B cell (primary cell): ENCODE measurements at regions of chr3 and their contacts with region 1.

Region 1: DNA sequence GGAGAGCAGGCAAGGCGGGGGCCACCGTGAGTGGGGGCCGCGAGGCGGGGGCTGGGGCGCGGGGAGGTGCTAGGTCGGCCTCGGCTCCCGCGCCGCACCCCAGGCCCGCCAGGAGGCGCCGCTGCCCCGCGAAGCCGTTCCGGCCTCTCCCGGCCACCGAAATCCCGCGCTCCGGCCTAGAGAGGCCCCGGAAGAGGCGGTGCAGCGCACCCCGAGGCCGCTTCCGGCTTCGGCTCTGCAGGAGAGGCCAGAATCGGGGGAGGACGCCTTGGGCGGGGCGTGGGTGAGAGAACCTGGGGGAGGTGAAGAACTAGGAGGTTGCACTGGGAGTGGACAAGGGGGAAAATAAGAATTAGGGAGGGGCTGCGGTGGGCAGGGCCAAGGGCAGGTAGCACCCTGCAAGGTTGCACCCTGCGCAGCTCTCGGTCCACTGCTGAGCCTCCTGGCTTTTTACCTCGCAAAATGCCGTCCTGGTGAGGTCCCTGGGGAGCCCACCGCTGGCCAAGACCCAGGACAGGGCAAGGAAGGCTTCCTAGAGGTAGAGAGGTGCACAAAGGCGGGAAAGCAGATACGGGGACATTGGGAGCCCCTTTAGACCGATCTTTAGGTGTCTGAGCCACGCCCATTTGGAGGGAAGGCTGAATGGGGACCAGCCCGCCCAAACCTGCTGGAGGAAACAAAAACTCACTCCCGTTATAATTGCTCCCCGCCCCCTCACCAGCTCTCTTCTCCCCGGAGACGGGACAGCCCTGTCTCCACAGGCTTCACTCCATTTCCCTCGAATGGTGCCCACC is 8.4 kb upstream of the GNAI2 start:
- DNase-seq: peak; percentile 93
- ATAC-seq: peak; percentile 81
- H3K4me3 ChIP-seq: peak overlapping the region; percentile 66 to 82 (median 72)
- H3K4me3 Mint-ChIP-seq: peak overlapping the region; percentile 96
- H3K27ac ChIP-seq: peak overlapping the region; percentile 21 to 41
- H3K27ac Mint-ChIP-seq: peak overlapping the region; percentile 94
- H3K4me1 ChIP-seq: peaks cover 25 to 51% of the 10 kb centered on the region in 2 donors
- H3K4me1 Mint-ChIP-seq: peaks cover 45% of the 10 kb centered on the region
- H3K27me3 ChIP-seq: no peaks in the 10 kb centered on the region
- H3K27me3 Mint-ChIP-seq: peaks cover 4% of the 10 kb centered on the region
- CTCF ChIP-seq: peak; percentile 92

Region 2: DNA sequence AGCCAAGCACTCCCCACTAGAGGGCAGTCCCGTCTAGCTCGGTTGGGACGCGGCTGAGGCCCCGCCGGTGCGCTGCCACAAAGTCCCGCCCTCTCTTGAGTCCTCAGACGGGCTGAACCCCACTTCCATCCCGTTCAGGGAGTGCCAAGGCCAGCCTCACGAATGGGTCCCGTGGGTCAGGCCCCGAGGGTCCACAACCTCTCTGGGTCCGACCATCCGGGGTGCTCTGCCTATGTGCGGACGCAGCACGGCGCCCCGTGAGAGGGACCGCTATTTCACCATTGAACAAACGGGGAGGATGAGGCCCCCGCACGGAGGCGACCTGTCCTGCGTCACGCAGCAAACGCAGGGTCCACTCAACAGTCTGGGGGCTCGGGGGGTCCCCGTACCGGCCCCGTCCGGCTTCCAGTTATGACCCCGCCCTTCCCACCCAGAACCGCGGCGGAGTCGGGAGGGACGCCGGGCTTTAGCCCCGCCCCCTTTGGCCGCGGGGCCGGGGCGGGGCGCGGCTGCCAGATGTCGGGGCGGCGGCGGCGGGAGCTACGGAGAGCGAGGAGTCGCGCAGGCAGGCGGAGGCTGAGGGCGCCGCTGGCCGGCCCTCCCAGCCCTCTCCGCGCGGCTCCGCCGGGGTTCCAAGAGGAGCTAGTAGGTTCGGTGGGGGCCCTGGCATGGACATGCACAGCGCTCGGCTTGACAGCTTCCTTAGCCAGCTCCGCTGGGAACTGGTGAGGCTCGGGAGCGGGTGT is 424.7 kb before region 1 on chr3 and contains the start of gene INKA1:
- CTCF ChIA-PET with region 1: no interaction called
- POLR2A ChIA-PET with region 1: no interaction called
- intact Hi-C with region 1: loop called (anchors 5 kb)
- DNase-seq: peak; percentile 94
- ATAC-seq: peak; percentile 63
- H3K4me3 ChIP-seq: peak within 1 kb of the TSS; percentile 73 to 99 (median 95)
- H3K4me3 Mint-ChIP-seq: peak within 1 kb of the TSS; percentile 86
- H3K27ac ChIP-seq: peak within 1 kb of the TSS; percentile 91 to 97
- H3K27ac Mint-ChIP-seq: peak within 1 kb of the TSS; percentile 98
- H3K4me1 ChIP-seq: peaks cover 42 to 47% of the 10 kb centered on the region in 2 donors
- H3K4me1 Mint-ChIP-seq: peaks cover 52% of the 10 kb centered on the region
- H3K27me3 ChIP-seq: peaks cover 0 to 3% (median 0%) of the 10 kb centered on the region in 4 experiments
- H3K27me3 Mint-ChIP-seq: peaks cover 5% of the 10 kb centered on the region
- CTCF ChIP-seq: peak; percentile 84
- total RNA-seq, gene INKA1: 25.8 and 28.2 TPM in 2 replicates

Region 3: GRCh38 chr3:50121416-50122032 is 106.1 kb before region 1 on chr3:
- CTCF ChIA-PET with region 1: interaction called, 28 read pairs
- POLR2A ChIA-PET with region 1: interaction called, 6 read pairs
- intact Hi-C with region 1: no loop called
- DNase-seq: peak; percentile 82
- ATAC-seq: peak; percentile 80
- H3K4me3 ChIP-seq: no peak overlapping the region
- H3K4me3 Mint-ChIP-seq: no peak overlapping the region
- H3K27ac ChIP-seq: no peak overlapping the region
- H3K27ac Mint-ChIP-seq: no peak overlapping the region
- H3K4me1 ChIP-seq: no peaks in the 10 kb centered on the region
- H3K4me1 Mint-ChIP-seq: peaks cover 2% of the 10 kb centered on the region
- H3K27me3 ChIP-seq: peaks cover 0 to 2% (median 0%) of the 10 kb centered on the region in 4 experiments
- H3K27me3 Mint-ChIP-seq: no peaks in the 10 kb centered on the region
- CTCF ChIP-seq: peak; percentile 91

Region 4: GRCh38 chr3:50192689-50193141 is 34.9 kb before region 1 on chr3:
- CTCF ChIA-PET with region 1: interaction called, 214 read pairs
- POLR2A ChIA-PET with region 1: interaction called, 16 read pairs
- intact Hi-C with region 1: loop called (anchors 1 kb)
- DNase-seq: peak; percentile 88
- ATAC-seq: peak; percentile 69
- H3K4me3 ChIP-seq: no peak overlapping the region
- H3K4me3 Mint-ChIP-seq: peak overlapping the region; percentile 52
- H3K27ac ChIP-seq: no peak overlapping the region
- H3K27ac Mint-ChIP-seq: no peak overlapping the region
- H3K4me1 ChIP-seq: peaks cover 17 to 23% of the 10 kb centered on the region in 2 donors
- H3K4me1 Mint-ChIP-seq: peaks cover 11% of the 10 kb centered on the region
- H3K27me3 ChIP-seq: peaks cover 0 to 46% (median 11%) of the 10 kb centered on the region in 4 experiments
- H3K27me3 Mint-ChIP-seq: peaks cover 18% of the 10 kb centered on the region
- CTCF ChIP-seq: peak; percentile 86

Region 5: GRCh38 chr3:50245831-50246516 is 18.4 kb after region 1 on chr3:
- CTCF ChIA-PET with region 1: interaction called, 596 read pairs
- POLR2A ChIA-PET with region 1: interaction called, 10 read pairs
- intact Hi-C with region 1: loop called (anchors 1 kb)
- DNase-seq: peak; percentile 92
- ATAC-seq: peak; percentile 66
- H3K4me3 ChIP-seq: peak overlapping the region in 4 of 5 experiments; percentile 37 to 50 (median 40)
- H3K4me3 Mint-ChIP-seq: peak overlapping the region; percentile 82
- H3K27ac ChIP-seq: peak overlapping the region; percentile 76 to 86
- H3K27ac Mint-ChIP-seq: peak overlapping the region; percentile 89
- H3K4me1 ChIP-seq: peaks cover 66 to 94% of the 10 kb centered on the region in 2 donors
- H3K4me1 Mint-ChIP-seq: peaks cover 82% of the 10 kb centered on the region
- H3K27me3 ChIP-seq: no peaks in the 10 kb centered on the region
- H3K27me3 Mint-ChIP-seq: no peaks in the 10 kb centered on the region
- CTCF ChIP-seq: peak; percentile 96

Region 6: DNA sequence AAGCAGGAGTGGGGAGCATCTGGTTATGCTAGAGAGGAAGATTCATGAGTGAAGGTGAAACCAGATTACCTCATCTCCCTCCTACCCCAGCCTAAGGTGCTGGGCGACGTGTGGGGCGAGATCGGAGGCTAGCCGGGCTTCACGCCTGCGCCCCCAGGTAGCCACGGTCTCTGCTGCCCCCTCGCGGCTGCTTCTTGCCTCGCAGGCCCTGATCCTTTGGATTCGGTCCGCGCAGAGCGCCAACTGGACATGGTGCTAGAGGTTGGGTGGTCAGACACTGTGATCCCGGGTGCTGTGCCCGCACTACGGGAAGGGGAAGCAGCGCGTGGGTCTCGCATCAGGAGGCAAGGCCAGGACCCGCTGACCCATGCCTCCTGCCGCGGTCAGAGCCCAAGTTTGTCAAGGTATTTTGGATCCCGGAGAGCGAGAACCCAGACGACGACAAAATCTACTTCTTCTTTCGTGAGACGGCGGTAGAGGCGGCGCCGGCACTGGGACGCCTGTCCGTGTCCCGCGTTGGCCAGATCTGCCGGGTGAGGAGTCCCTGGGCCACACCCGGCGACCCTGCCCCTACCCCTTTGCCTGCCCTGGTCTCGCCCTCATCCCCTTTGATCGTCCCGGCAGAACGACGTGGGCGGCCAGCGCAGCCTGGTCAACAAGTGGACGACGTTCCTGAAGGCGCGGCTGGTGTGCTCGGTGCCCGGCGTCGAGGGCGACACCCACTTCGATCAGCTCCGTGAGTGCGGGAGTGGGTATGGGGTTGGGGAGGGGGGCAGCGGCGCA is 45.5 kb after region 1 on chr3:
- CTCF ChIA-PET with region 1: interaction called, 18 read pairs
- POLR2A ChIA-PET with region 1: no interaction called
- intact Hi-C with region 1: loop called (anchors 1 kb)
- DNase-seq: peak; percentile 91
- ATAC-seq: peak; percentile 98
- H3K4me3 ChIP-seq: peak overlapping the region in 3 of 5 experiments; percentile 8 to 48 (median 30)
- H3K4me3 Mint-ChIP-seq: peak overlapping the region; percentile 82
- H3K27ac ChIP-seq: no peak overlapping the region
- H3K27ac Mint-ChIP-seq: peak overlapping the region; percentile 81
- H3K4me1 ChIP-seq: peaks cover 33 to 39% of the 10 kb centered on the region in 2 donors
- H3K4me1 Mint-ChIP-seq: peaks cover 26% of the 10 kb centered on the region
- H3K27me3 ChIP-seq: peaks cover 0 to 53% (median 21%) of the 10 kb centered on the region in 4 experiments
- H3K27me3 Mint-ChIP-seq: peaks cover 36% of the 10 kb centered on the region
- CTCF ChIP-seq: peak; percentile 97

Region 7: DNA sequence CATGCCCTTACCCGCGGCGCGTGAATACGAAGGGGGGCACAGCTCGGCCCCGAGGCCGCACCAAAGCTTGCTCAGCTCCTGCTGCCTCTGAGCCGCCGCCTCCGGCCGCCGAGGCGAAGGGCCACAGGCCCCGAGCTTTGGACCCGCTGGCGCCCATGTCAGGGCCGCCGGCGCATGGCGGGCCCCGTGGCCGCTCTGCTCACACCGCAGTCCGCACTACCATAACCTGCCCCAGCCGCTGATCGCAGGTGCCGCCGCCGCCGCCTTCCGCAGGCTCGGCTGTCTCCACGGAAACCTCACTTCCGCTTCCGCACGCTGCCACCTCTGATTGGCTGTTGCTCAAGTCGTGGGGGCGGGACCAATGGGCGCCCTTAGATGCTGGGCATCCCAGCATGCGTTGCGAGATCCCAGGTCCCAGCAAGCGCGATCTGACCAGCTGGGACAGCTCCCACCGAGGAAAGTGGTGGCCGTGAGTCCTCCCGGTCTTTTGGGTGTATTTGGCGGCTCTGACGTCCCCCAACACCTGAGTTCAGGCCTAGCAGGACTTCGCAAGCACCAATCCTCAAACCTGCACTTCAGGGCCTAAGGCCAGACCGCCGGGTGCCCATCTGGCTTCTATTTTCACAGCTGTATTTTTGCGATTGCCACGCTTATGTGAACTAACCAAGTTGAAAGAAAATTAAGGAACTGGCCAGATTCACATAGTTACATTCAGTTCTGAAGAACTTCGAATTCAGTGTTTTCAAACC is 100.5 kb after region 1 on chr3 and contains the start of gene TUSC2:
- CTCF ChIA-PET with region 1: interaction called, 7 read pairs
- POLR2A ChIA-PET with region 1: no interaction called
- intact Hi-C with region 1: loop called (anchors 1 kb)
- DNase-seq: peak; percentile 97
- ATAC-seq: peak; percentile 94
- H3K4me3 ChIP-seq: peak within 1 kb of the TSS; percentile 39 to 98 (median 87)
- H3K4me3 Mint-ChIP-seq: peak within 1 kb of the TSS; percentile 95
- H3K27ac ChIP-seq: peak within 1 kb of the TSS; percentile 66 to 90
- H3K27ac Mint-ChIP-seq: peak within 1 kb of the TSS; percentile 91
- H3K4me1 ChIP-seq: peaks cover 14 to 24% of the 10 kb centered on the region in 2 donors
- H3K4me1 Mint-ChIP-seq: peaks cover 25% of the 10 kb centered on the region
- H3K27me3 ChIP-seq: no peaks in the 10 kb centered on the region
- H3K27me3 Mint-ChIP-seq: no peaks in the 10 kb centered on the region
- CTCF ChIP-seq: no peak
- total RNA-seq, gene TUSC2: 25.5 and 28.2 TPM in 2 replicates

Region 8: GRCh38 chr3:50737908-50738598 is 510.5 kb after region 1 on chr3:
- CTCF ChIA-PET with region 1: no interaction called
- POLR2A ChIA-PET with region 1: no interaction called
- intact Hi-C with region 1: no loop called
- DNase-seq: no peak
- ATAC-seq: no peak
- H3K4me3 ChIP-seq: no peak overlapping the region
- H3K4me3 Mint-ChIP-seq: no peak overlapping the region
- H3K27ac ChIP-seq: no peak overlapping the region
- H3K27ac Mint-ChIP-seq: no peak overlapping the region
- H3K4me1 ChIP-seq: no peaks in the 10 kb centered on the region
- H3K4me1 Mint-ChIP-seq: no peaks in the 10 kb centered on the region
- H3K27me3 ChIP-seq: no peaks in the 10 kb centered on the region
- H3K27me3 Mint-ChIP-seq: peaks cover 4% of the 10 kb centered on the region
- CTCF ChIP-seq: no peak

Region 9: GRCh38 chr3:51163051-51163450 is 935.5 kb after region 1 on chr3:
- CTCF ChIA-PET with region 1: no interaction called
- POLR2A ChIA-PET with region 1: no interaction called
- intact Hi-C with region 1: no loop called
- DNase-seq: no peak
- ATAC-seq: no peak
- H3K4me3 ChIP-seq: no peak overlapping the region
- H3K4me3 Mint-ChIP-seq: no peak overlapping the region
- H3K27ac ChIP-seq: no peak overlapping the region
- H3K27ac Mint-ChIP-seq: no peak overlapping the region
- H3K4me1 ChIP-seq: no peaks in the 10 kb centered on the region
- H3K4me1 Mint-ChIP-seq: no peaks in the 10 kb centered on the region
- H3K27me3 ChIP-seq: no peaks in the 10 kb centered on the region
- H3K27me3 Mint-ChIP-seq: peaks cover 2% of the 10 kb centered on the region
- CTCF ChIP-seq: no peak